ENCODE measurements at regions of chr7 and their contacts with region 1.

Region 1: GRCh38 chr7:113414401-113415035 is 296.2 kb upstream of the SMIM30 start:
- DNase-seq: no peak
- H3K4me3 ChIP-seq: no peak overlapping the region
- H3K27ac ChIP-seq: no peak overlapping the region
- H3K4me1 ChIP-seq: no peaks in the 10 kb centered on the region
- H3K27me3 ChIP-seq: no peaks in the 10 kb centered on the region
- CTCF ChIP-seq: no peak
- POLR2A ChIP-seq: no peak

Region 2: GRCh38 chr7:112566442-112567324 is 847.8 kb before region 1 on chr7:
- intact Hi-C with region 1: loop called (anchors 10 kb)
- DNase-seq: no peak
- H3K4me3 ChIP-seq: no peak overlapping the region
- H3K27ac ChIP-seq: no peak overlapping the region
- H3K4me1 ChIP-seq: peaks cover 8% of the 10 kb centered on the region
- H3K27me3 ChIP-seq: no peaks in the 10 kb centered on the region
- CTCF ChIP-seq: no peak
- POLR2A ChIP-seq: no peak

Measured in vagina (tissue), 2 donors.